ENCODE measurements at regions of chr5 and their contacts with region 1.

Region 1: DNA sequence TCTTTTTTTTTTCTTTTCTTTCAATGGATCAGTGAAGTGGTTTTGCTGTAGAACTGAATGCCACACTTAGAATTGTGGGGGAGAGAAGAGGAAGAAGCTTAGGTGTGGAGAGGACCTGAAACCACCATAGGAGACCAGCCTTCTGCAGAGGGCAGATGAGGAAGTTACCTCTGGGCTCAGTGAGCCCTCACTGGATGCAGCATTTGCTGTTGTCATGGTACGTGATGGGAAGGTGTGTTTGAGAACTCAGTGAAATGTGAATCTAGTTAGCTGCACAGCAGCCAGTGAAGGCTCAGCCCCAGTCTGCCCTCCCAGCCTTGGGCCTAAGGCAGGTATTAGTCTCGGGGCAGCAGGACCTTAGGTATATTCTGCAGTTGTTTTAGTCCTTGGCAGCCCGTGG is 17.5 kb downstream of the CYFIP2 start:
- DNase-seq: peak in 4 of 9 donors; percentile 21 to 45 (median 36)
- ATAC-seq: peak; percentile 91
- H3K4me3 ChIP-seq: no peak overlapping the region
- H3K4me3 Mint-ChIP-seq: peak overlapping the region; percentile 6 to 75 (median 60)
- H3K27ac ChIP-seq: peak overlapping the region; percentile 37
- H3K27ac Mint-ChIP-seq: peak overlapping the region; percentile 60 to 98 (median 84)
- H3K4me1 ChIP-seq: peaks cover 47 to 79% of the 10 kb centered on the region in 2 donors
- H3K4me1 Mint-ChIP-seq: peaks cover 62 to 93% (median 90%) of the 10 kb centered on the region in 7 donors
- H3K27me3 ChIP-seq: no peaks in the 10 kb centered on the region
- H3K27me3 Mint-ChIP-seq: no peaks in the 10 kb centered on the region

Region 2: DNA sequence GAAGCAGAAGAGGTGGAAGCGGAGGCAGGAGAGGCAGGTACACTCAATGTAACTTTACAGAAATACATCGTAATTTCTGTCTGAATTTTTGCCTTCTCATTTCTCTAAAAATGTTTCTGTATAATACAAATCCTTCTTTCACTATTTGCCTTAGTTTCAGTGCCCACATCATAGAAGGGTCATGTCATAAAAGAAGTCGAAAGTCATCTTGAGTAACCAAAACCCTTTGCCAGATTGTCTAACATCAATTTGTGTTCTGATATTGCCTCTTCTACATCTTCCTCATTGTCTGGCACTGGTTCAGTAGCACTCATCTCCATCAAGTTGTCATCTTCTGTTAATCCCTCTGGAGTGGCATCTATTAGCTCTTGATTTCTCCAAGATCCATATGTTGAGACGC is 23.7 kb before region 1 on chr5:
- CTCF ChIA-PET with region 1: interaction called, 3 read pairs
- POLR2A ChIA-PET with region 1: interaction called, 10 read pairs
- intact Hi-C with region 1: no loop called
- DNase-seq: no peak
- ATAC-seq: no peak
- H3K4me3 ChIP-seq: no peak overlapping the region
- H3K4me3 Mint-ChIP-seq: peak overlapping the region in 4 of 10 donors; percentile 6 to 32 (median 20)
- H3K27ac ChIP-seq: no peak overlapping the region
- H3K27ac Mint-ChIP-seq: peak overlapping the region; percentile 0 to 98 (median 58)
- H3K4me1 ChIP-seq: peaks cover 41 to 70% of the 10 kb centered on the region in 2 donors
- H3K4me1 Mint-ChIP-seq: peaks cover 54 to 88% (median 83%) of the 10 kb centered on the region in 7 donors
- H3K27me3 ChIP-seq: no peaks in the 10 kb centered on the region
- H3K27me3 Mint-ChIP-seq: no peaks in the 10 kb centered on the region

Region 3: GRCh38 chr5:157265714-157266285 is 17.6 kb before region 1 on chr5 and contains the start of gene CYFIP2:
- CTCF ChIA-PET with region 1: interaction called, 5 read pairs
- POLR2A ChIA-PET with region 1: interaction called, 9 read pairs
- intact Hi-C with region 1: loop called (anchors 2 kb)
- DNase-seq: peak; percentile 68 to 85 (median 84)
- ATAC-seq: peak; percentile 94
- H3K4me3 ChIP-seq: peak within 1 kb of the TSS; percentile 83
- H3K4me3 Mint-ChIP-seq: peak within 1 kb of the TSS; percentile 95 to 99 (median 97)
- H3K27ac ChIP-seq: peak within 1 kb of the TSS; percentile 84
- H3K27ac Mint-ChIP-seq: peak within 1 kb of the TSS; percentile 95 to 99 (median 98)
- H3K4me1 ChIP-seq: peaks cover 41 to 57% of the 10 kb centered on the region in 2 donors
- H3K4me1 Mint-ChIP-seq: peaks cover 51 to 76% (median 72%) of the 10 kb centered on the region in 7 donors
- H3K27me3 ChIP-seq: no peaks in the 10 kb centered on the region
- H3K27me3 Mint-ChIP-seq: no peaks in the 10 kb centered on the region
- total RNA-seq, gene CYFIP2: 386 to 449 (median 401) TPM

Region 4: DNA sequence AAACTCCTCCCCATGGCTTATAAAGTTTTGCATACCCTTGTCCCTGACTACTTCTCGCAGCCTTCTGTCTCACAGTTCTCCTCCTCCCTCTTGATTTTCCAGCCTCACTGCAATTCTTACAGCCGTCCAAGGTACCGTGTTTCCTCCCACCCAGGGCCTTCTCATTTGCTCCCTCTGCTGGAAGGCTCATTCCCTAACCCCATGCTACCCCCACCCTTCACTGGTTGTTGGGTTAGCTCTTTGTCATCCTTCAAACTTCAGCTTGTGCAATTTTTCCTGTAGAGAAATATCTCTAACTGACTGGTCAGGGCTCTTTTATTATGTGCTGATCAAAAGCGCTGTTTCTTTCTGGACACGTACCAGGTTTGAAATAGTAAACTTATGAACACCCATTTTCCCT is 1487.1 kb after region 1 on chr5:
- CTCF ChIA-PET with region 1: no interaction called
- POLR2A ChIA-PET with region 1: no interaction called
- intact Hi-C with region 1: no loop called
- DNase-seq: no peak
- ATAC-seq: no peak
- H3K4me3 ChIP-seq: no peak overlapping the region
- H3K4me3 Mint-ChIP-seq: no peak overlapping the region
- H3K27ac ChIP-seq: no peak overlapping the region
- H3K27ac Mint-ChIP-seq: no peak overlapping the region
- H3K4me1 ChIP-seq: no peaks in the 10 kb centered on the region
- H3K4me1 Mint-ChIP-seq: peaks cover 0 to 4% (median 2%) of the 10 kb centered on the region in 7 donors
- H3K27me3 ChIP-seq: peaks cover 0 to 3% of the 10 kb centered on the region in 2 donors
- H3K27me3 Mint-ChIP-seq: peaks cover 6 to 22% (median 12%) of the 10 kb centered on the region in 5 donors